ENCODE measurements at regions of chr20 and their contacts with region 1.

Region 1: GRCh38 chr20:1952737-1953530 is 40.9 kb downstream of the PDYN start:
- DNase-seq: no peak
- H3K4me3 ChIP-seq: no peak overlapping the region
- H3K27ac ChIP-seq: no peak overlapping the region
- H3K4me1 ChIP-seq: no peaks in the 10 kb centered on the region
- H3K27me3 ChIP-seq: no peaks in the 10 kb centered on the region
- CTCF ChIP-seq: no peak

Region 2: DNA sequence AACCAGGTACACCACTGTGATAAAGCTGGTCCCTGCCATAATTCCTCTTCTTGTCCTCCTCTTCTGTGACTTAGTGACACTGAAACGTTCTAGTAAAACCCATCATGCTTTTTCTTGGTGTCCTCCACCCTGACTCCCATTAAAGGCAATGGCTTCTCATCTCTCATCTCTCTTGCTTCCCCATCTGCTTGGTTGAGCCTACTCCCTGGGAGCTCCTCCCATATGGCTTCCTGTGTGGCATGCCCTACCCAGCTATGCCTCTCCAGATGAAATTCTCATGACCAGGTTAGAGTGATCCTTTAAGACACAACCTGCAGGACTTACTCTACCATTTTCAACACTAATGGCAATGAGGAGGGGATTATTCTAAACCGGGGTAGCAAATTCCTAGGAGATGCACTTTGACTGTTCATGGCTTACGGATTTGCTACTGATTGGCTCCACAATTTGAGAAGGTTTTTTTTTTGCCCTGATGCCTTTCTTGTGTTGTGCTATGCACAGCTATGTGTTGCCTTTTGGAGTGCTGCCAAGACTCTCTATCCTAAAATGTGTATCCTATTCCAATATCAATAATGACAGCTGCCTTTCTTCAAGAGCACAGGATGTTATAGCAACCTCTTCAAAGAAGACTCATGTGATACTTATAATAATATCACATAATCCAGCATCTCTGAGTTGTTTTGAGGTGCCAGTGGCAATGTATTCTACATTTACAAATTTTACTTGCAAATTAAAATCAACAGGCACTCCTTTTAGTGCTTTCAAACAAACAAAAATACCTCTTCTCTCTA is 301.5 kb before region 1 on chr20:
- CTCF ChIA-PET with region 1: no interaction called
- dilution Hi-C with region 1: no loop called
- in situ Hi-C with region 1: no loop called
- intact Hi-C with region 1: no loop called
- DNase-seq: no peak
- H3K4me3 ChIP-seq: no peak overlapping the region
- H3K27ac ChIP-seq: no peak overlapping the region
- H3K4me1 ChIP-seq: no peaks in the 10 kb centered on the region
- H3K27me3 ChIP-seq: no peaks in the 10 kb centered on the region
- CTCF ChIP-seq: no peak

Region 3: GRCh38 chr20:1854246-1854645 is 98.7 kb before region 1 on chr20:
- CTCF ChIA-PET with region 1: no interaction called
- dilution Hi-C with region 1: loop called (anchors 5 kb)
- in situ Hi-C with region 1: no loop called
- intact Hi-C with region 1: no loop called
- DNase-seq: no peak
- H3K4me3 ChIP-seq: no peak overlapping the region
- H3K27ac ChIP-seq: no peak overlapping the region
- H3K4me1 ChIP-seq: no peaks in the 10 kb centered on the region
- H3K27me3 ChIP-seq: no peaks in the 10 kb centered on the region
- CTCF ChIP-seq: no peak

Region 4: DNA sequence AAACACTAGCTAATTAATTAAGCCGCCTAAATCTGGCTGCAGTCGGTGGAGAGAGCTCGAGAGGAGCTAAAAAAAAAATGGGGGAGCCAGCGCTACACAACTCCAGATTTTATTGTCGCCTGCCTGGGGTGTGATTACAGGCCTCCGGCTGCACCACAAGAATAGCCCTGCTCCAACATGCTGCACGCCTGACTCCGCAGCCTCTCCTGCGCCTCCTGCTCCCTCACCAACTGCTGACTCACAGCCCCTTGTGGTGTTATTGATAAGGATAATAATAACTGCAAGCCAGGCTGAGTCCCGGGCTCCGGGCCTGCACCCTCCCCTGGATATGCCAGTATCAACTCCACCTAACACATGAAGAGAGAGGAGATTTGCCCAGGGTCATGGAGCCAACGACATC is 40.9 kb before region 1 on chr20:
- CTCF ChIA-PET with region 1: no interaction called
- dilution Hi-C with region 1: no loop called
- in situ Hi-C with region 1: no loop called
- intact Hi-C with region 1: no loop called
- DNase-seq: peak; percentile 70
- H3K4me3 ChIP-seq: no peak overlapping the region
- H3K27ac ChIP-seq: peak overlapping the region; percentile 28
- H3K4me1 ChIP-seq: peaks cover 26% of the 10 kb centered on the region
- H3K27me3 ChIP-seq: no peaks in the 10 kb centered on the region
- CTCF ChIP-seq: peak in 1 of 2 donors; percentile 38

Region 5: DNA sequence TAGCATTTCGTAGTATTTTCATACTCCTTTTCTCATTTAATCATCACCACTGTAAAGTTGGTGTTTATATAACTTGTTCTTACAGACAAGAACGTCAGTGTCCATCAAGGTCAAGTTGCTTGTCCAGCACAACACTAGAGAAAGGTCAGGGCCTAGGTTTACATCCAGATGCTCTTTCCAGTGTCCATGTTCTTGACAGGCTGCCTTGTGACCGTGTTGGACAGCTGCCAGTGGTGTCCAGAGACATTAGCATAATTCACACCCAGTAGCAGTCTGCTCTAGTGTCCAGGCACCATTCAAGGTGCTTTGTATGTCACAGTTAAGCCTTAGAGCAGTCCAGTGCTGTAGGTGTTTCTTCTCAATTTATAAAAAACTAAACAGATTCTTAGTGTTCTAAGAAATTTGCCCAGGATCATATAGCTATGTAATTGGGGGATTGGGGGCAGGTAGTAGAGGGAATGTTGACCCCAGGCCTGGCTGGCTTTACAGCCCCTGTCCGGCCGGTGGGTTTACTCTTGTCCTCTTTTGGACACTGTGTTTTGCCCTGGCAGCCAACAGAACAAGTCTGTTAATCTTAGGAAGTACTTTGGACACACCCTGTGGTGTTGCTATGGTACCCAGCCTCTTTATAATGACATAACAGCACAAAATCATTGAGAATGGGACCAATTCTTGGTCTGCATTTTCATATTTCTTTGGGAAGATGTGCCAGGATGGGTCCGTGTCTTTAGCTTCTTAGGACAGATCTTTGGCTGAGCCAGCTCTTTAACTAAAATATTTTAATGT is 156.7 kb after region 1 on chr20:
- CTCF ChIA-PET with region 1: no interaction called
- dilution Hi-C with region 1: no loop called
- in situ Hi-C with region 1: no loop called
- intact Hi-C with region 1: no loop called
- DNase-seq: no peak
- H3K4me3 ChIP-seq: no peak overlapping the region
- H3K27ac ChIP-seq: peak overlapping the region; percentile 71
- H3K4me1 ChIP-seq: peaks cover 28% of the 10 kb centered on the region
- H3K27me3 ChIP-seq: no peaks in the 10 kb centered on the region
- CTCF ChIP-seq: no peak